CD4-positive, alpha-beta memory T cell (primary cell): ENCODE measurements at regions of chr21 and their contacts with region 1.

Region 1: DNA sequence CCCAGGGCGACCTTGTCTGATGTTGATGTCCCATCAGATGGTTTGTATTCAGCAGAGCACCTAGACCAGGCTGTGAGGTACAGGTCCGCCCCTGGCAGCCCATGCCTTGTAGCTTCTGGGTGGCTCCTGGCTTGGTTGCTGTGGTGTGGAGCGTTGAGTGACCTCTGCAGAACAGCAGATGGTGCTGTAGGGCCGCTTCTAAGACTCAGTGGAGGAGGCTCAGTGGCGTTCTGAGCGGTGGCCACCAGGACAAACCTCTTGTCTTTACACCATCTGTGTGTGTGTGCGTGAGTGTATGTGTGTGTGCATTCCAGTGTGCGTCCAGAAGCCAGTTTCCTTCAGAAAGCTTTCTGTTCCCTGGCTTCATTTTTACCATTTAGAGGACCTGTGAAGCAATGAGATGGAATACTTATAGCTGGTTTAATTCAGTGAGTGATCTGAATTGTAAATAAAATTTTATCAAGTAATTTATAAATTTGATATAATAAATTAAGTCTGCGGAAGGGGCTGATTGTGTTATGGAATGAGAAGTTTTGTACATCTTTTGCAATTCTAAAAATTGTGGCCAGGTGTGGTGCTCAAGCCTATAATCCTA is 66.1 kb downstream of the ADARB1 start:
- DNase-seq: peak; percentile 58 to 72 (median 61)
- H3K4me3 ChIP-seq: no peak overlapping the region
- H3K4me3 Mint-ChIP-seq: no peak overlapping the region
- H3K27ac ChIP-seq: no peak overlapping the region
- H3K27ac Mint-ChIP-seq: peak overlapping the region in 3 of 7 donors; percentile 8 to 47 (median 12)
- H3K4me1 ChIP-seq: no peaks in the 10 kb centered on the region
- H3K4me1 Mint-ChIP-seq: peaks cover 6 to 22% (median 16%) of the 10 kb centered on the region in 4 donors
- H3K27me3 ChIP-seq: no peaks in the 10 kb centered on the region
- H3K27me3 Mint-ChIP-seq: no peaks in the 10 kb centered on the region

Region 2: GRCh38 chr21:44949779-44950198 is 190.7 kb before region 1 on chr21:
- CTCF ChIA-PET with region 1: interaction called, 252 read pairs
- POLR2A ChIA-PET with region 1: no interaction called
- intact Hi-C with region 1: loop called (anchors 1 kb)
- DNase-seq: peak; percentile 72 to 80 (median 75)
- H3K4me3 ChIP-seq: no peak overlapping the region
- H3K4me3 Mint-ChIP-seq: no peak overlapping the region
- H3K27ac ChIP-seq: no peak overlapping the region
- H3K27ac Mint-ChIP-seq: peak overlapping the region in 1 of 7 donors; percentile 52
- H3K4me1 ChIP-seq: peaks cover 9% of the 10 kb centered on the region
- H3K4me1 Mint-ChIP-seq: peaks cover 4 to 22% (median 11%) of the 10 kb centered on the region in 4 donors
- H3K27me3 ChIP-seq: no peaks in the 10 kb centered on the region
- H3K27me3 Mint-ChIP-seq: no peaks in the 10 kb centered on the region

Region 3: GRCh38 chr21:45054921-45055612 is 85.4 kb before region 1 on chr21:
- CTCF ChIA-PET with region 1: interaction called, 18 read pairs
- POLR2A ChIA-PET with region 1: no interaction called
- intact Hi-C with region 1: no loop called
- DNase-seq: no peak
- H3K4me3 ChIP-seq: no peak overlapping the region
- H3K4me3 Mint-ChIP-seq: no peak overlapping the region
- H3K27ac ChIP-seq: no peak overlapping the region
- H3K27ac Mint-ChIP-seq: peak overlapping the region in 1 of 7 donors; percentile 29
- H3K4me1 ChIP-seq: no peaks in the 10 kb centered on the region
- H3K4me1 Mint-ChIP-seq: peaks cover 0 to 1% (median 0%) of the 10 kb centered on the region in 4 donors
- H3K27me3 ChIP-seq: peaks cover 7% of the 10 kb centered on the region
- H3K27me3 Mint-ChIP-seq: peaks cover 7 to 25% of the 10 kb centered on the region in 2 donors

Region 4: DNA sequence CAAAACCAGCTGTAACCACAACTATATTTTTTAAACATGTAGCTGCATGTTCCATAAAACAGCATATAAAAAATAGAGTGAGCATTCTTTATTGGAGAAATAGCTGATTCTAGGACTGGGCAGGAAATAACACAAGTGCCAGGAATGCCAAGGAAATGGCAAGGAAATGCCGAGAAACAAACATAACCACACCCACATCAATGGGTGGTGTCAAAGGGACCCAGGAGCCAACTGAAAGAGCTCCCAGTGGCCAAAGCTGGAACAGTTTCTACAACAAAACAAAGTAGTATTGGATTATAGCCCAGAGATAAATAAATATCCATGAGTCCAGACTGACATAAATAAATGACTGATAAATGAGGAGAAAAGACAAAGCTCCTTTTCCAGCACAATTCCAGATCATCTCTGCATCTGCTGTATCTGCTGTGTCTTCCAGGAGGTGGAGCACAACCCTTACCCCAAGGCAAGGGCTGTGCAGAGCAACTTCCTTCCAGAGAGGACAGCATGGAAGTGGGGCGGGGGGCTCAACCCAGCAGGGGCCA is 38.0 kb before region 1 on chr21:
- CTCF ChIA-PET with region 1: interaction called, 39 read pairs
- POLR2A ChIA-PET with region 1: no interaction called
- intact Hi-C with region 1: no loop called
- DNase-seq: no peak
- H3K4me3 ChIP-seq: no peak overlapping the region
- H3K4me3 Mint-ChIP-seq: peak overlapping the region in 3 of 8 donors; percentile 15 to 26 (median 25)
- H3K27ac ChIP-seq: no peak overlapping the region
- H3K27ac Mint-ChIP-seq: peak overlapping the region in 1 of 7 donors; percentile 43
- H3K4me1 ChIP-seq: peaks cover 43% of the 10 kb centered on the region
- H3K4me1 Mint-ChIP-seq: peaks cover 50 to 78% (median 63%) of the 10 kb centered on the region in 4 donors
- H3K27me3 ChIP-seq: no peaks in the 10 kb centered on the region
- H3K27me3 Mint-ChIP-seq: no peaks in the 10 kb centered on the region

Region 5: GRCh38 chr21:45130324-45130774 is 10.1 kb before region 1 on chr21:
- CTCF ChIA-PET with region 1: interaction called, 208 read pairs
- POLR2A ChIA-PET with region 1: interaction called, 12 read pairs
- intact Hi-C with region 1: no loop called
- DNase-seq: no peak
- H3K4me3 ChIP-seq: no peak overlapping the region
- H3K4me3 Mint-ChIP-seq: no peak overlapping the region
- H3K27ac ChIP-seq: no peak overlapping the region
- H3K27ac Mint-ChIP-seq: no peak overlapping the region
- H3K4me1 ChIP-seq: no peaks in the 10 kb centered on the region
- H3K4me1 Mint-ChIP-seq: peaks cover 16 to 34% (median 24%) of the 10 kb centered on the region in 4 donors
- H3K27me3 ChIP-seq: no peaks in the 10 kb centered on the region
- H3K27me3 Mint-ChIP-seq: no peaks in the 10 kb centered on the region

Region 6: GRCh38 chr21:45167796-45168222 is 27.4 kb after region 1 on chr21:
- CTCF ChIA-PET with region 1: interaction called, 24 read pairs
- POLR2A ChIA-PET with region 1: no interaction called
- intact Hi-C with region 1: no loop called
- DNase-seq: no peak
- H3K4me3 ChIP-seq: no peak overlapping the region
- H3K4me3 Mint-ChIP-seq: no peak overlapping the region
- H3K27ac ChIP-seq: no peak overlapping the region
- H3K27ac Mint-ChIP-seq: no peak overlapping the region
- H3K4me1 ChIP-seq: peaks cover 23% of the 10 kb centered on the region
- H3K4me1 Mint-ChIP-seq: peaks cover 27 to 39% (median 32%) of the 10 kb centered on the region in 4 donors
- H3K27me3 ChIP-seq: no peaks in the 10 kb centered on the region
- H3K27me3 Mint-ChIP-seq: no peaks in the 10 kb centered on the region